ENCODE measurements at regions of chr12 and their contacts with region 1.

Region 1: DNA sequence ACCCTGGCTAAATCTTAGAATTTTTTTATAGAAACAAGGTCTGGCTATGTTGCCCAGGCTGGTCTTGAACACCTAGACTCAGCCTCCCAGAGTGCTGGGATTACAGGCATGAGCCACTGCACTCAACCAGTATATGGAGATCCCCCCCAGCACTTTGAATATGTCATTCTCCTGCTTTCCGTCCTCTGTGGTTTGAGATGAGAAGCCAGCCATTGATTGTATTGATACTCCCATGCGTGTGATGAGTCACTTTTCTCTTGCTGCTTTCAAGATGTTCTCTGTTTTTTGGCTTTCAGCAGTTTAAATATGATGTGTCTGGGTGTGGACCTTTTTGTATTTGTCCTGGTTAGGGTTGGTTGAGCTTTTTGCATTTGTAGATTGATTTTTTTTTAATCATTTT is 75.2 kb upstream of the DNM1L start:
- DNase-seq: peak; percentile 61
- H3K4me3 Mint-ChIP-seq: no peak overlapping the region
- H3K27ac Mint-ChIP-seq: peak overlapping the region; percentile 72
- H3K4me1 Mint-ChIP-seq: peaks cover 31% of the 10 kb centered on the region
- H3K27me3 Mint-ChIP-seq: no peaks in the 10 kb centered on the region

Region 2: DNA sequence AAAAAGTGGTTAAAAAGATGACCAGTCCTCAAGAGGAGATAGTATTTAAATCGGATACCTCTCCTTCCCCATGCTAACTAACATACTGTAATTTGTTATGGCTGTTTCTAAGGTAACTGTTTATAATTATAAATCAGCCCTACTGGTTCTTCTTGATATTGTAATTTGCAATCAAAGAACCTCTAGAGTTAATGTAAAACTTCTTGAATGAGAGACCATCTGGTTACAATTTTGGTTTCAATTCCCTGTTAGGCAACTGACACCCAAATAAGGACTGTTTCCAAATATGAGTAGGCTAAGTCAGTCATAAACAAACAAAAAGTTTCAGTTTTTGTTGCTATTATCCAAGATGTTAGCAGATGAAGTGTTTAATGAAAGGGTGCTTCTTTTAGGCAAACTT is 45.0 kb before region 1 on chr12:
- intact Hi-C with region 1: loop called (anchors 1 kb)
- DNase-seq: no peak
- H3K4me3 Mint-ChIP-seq: no peak overlapping the region
- H3K27ac Mint-ChIP-seq: no peak overlapping the region
- H3K4me1 Mint-ChIP-seq: peaks cover 31% of the 10 kb centered on the region
- H3K27me3 Mint-ChIP-seq: no peaks in the 10 kb centered on the region

Region 3: DNA sequence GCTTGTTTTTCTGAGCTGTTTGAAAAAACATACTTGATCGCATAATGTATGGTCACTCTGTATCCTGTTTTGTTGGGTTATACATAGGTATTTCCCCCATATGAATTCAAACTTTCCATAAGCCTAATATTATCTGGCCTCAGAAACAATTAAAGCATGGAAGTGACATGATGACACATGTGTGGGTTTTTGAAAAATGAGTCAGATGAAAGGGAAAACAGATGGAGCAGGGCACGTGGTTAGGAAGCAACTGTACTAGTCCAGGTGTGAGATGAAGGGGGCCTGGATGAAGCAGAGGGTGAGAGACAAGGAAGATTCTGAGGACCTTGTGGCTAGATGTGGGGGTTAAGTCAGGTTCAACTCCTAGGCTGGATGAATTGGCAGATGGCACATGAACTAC is 17.5 kb before region 1 on chr12:
- intact Hi-C with region 1: loop called (anchors 1 kb)
- DNase-seq: no peak
- H3K4me3 Mint-ChIP-seq: peak overlapping the region; percentile 0
- H3K27ac Mint-ChIP-seq: peak overlapping the region; percentile 82
- H3K4me1 Mint-ChIP-seq: peaks cover 70% of the 10 kb centered on the region
- H3K27me3 Mint-ChIP-seq: no peaks in the 10 kb centered on the region

Measured in activated T-helper 2 cell treated with anti-CD3 and anti-CD28 coated beads, Interferon-gamma antibody, Interleukin-2, Interleukin-4, amounts not matched to agents 10 μg/mL and 5 μg/mL and 100 μg/mL, durations not matched to agents 14 hours and 24 hours and 36 hours (primary cell).